B cell (primary cell): ENCODE measurements at regions of chr1 and their contacts with region 1.

Region 1: DNA sequence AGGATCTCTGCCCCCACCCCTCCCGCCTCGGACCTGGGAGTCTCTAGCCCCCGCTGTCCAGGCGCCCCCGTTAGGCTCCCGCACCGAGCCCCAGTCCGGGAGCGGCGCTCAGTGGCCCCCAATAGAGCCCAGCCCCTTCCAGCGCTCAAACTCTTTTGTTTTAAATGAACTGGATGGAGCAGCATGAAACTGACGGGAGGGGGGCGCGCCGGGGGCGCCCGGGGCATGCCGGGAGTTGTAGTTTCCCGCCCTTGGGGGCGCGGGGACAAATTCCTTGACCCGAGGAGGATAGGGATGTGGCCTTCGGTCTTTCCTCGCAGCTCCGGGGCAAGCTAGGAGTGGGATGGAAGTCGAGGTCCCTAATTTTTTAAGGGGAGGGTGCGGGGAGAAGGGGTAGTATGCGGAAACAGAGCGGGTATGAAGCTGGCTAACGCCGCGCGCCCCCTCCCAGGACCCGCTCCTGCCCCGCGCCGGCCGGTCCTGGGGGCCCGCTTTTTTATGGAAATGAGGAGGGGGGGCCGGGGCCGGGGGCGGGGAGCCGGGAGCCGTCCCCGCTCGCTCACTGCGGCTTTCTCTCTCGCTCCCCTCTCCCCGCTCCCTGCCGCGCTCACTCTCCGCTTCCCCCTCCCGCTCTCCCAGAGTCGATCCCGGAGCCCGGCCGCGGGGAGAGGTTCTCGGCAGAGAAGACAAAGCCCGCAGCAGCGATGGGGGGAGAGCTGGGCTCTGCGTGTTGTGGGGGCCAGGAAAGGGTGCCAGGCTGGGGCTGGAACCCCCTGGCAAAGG is at the start of gene MEX3A:
- DNase-seq: peak; percentile 74
- ATAC-seq: peak; percentile 85
- H3K4me3 ChIP-seq: peak within 1 kb of the TSS; percentile 44 to 87 (median 81)
- H3K4me3 Mint-ChIP-seq: peak within 1 kb of the TSS; percentile 91
- H3K27ac ChIP-seq: peak within 1 kb of the TSS in 1 of 2 donors; percentile 26
- H3K27ac Mint-ChIP-seq: peak within 1 kb of the TSS; percentile 63
- H3K4me1 ChIP-seq: peaks cover 11 to 18% of the 10 kb centered on the region in 2 donors
- H3K4me1 Mint-ChIP-seq: peaks cover 22% of the 10 kb centered on the region
- H3K27me3 ChIP-seq: peaks cover 0 to 49% (median 21%) of the 10 kb centered on the region in 4 experiments
- H3K27me3 Mint-ChIP-seq: peaks cover 12% of the 10 kb centered on the region
- CTCF ChIP-seq: no peak
- total RNA-seq, gene MEX3A: 0.73 and 1.1 TPM in 2 replicates

Region 2: DNA sequence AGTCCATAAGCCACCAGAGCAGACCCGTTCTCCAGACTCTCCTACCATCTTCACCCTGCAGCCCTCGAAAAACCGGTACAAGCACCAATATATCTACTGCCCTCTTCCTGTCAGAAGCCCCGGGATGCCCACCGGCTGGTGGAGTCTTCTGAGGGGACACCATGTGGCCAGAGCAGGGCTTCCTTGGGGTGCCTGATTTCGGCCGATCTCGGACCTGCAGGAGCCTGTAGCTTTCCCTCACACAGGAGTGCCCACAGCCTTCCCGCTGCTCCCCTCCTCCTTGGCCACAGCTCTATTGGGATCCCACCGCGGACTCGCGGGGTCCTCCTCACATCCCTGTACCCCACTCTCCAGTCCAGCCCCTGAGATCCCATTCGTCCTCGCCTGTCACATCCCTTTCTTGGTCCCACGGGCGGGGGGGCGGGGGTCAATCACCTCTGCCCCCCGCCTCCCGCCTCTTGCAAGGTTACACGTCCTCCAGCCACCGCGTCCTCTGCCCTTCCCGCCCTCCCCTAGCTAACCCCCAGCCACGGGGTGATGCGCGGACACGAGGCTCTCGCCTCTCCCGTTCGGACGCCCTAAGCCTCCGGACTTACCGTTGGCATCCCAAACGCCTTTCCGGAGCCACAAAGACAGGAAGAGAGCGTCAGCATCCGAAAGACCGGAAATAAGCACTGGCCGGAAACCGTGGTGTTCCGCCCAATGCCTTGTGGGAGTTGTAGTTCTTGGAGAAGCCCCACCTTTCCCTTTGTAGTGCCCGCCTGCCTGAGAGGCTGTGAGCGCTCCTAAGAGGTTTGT is 62.0 kb before region 1 on chr1 and contains the start of gene SSR2:
- CTCF ChIA-PET with region 1: no interaction called
- POLR2A ChIA-PET with region 1: no interaction called
- intact Hi-C with region 1: loop called (anchors 1 kb)
- DNase-seq: peak; percentile 89
- ATAC-seq: peak; percentile 99
- H3K4me3 ChIP-seq: peak within 1 kb of the TSS; percentile 71 to 87 (median 81)
- H3K4me3 Mint-ChIP-seq: peak within 1 kb of the TSS; percentile 99
- H3K27ac ChIP-seq: peak within 1 kb of the TSS; percentile 59 to 68
- H3K27ac Mint-ChIP-seq: peak within 1 kb of the TSS; percentile 90
- H3K4me1 ChIP-seq: peaks cover 9 to 17% of the 10 kb centered on the region in 2 donors
- H3K4me1 Mint-ChIP-seq: peaks cover 22% of the 10 kb centered on the region
- H3K27me3 ChIP-seq: peaks cover 0 to 6% (median 0%) of the 10 kb centered on the region in 4 experiments
- H3K27me3 Mint-ChIP-seq: peaks cover 6% of the 10 kb centered on the region
- CTCF ChIP-seq: no peak
- total RNA-seq, gene SSR2: 160 and 161 TPM in 2 replicates

Region 3: GRCh38 chr1:156060937-156061636 is 21.4 kb before region 1 on chr1 and contains the start of gene RAB25:
- CTCF ChIA-PET with region 1: no interaction called
- POLR2A ChIA-PET with region 1: no interaction called
- intact Hi-C with region 1: no loop called
- DNase-seq: peak; percentile 15
- ATAC-seq: no peak
- H3K4me3 ChIP-seq: no peak within 1 kb of the TSS
- H3K4me3 Mint-ChIP-seq: no peak within 1 kb of the TSS
- H3K27ac ChIP-seq: no peak within 1 kb of the TSS
- H3K27ac Mint-ChIP-seq: no peak within 1 kb of the TSS
- H3K4me1 ChIP-seq: peaks cover 0 to 3% of the 10 kb centered on the region in 2 donors
- H3K4me1 Mint-ChIP-seq: peaks cover 5% of the 10 kb centered on the region
- H3K27me3 ChIP-seq: no peaks in the 10 kb centered on the region
- H3K27me3 Mint-ChIP-seq: no peaks in the 10 kb centered on the region
- CTCF ChIP-seq: no peak
- total RNA-seq, gene RAB25: 0.69 and 1.1 TPM in 2 replicates